Left ventricle myocardium inferior (tissue), 1 donor: ENCODE measurements at regions of chr13 and their contacts with region 1.

Region 1: GRCh38 chr13:33542283-33543088 is 256.9 kb upstream of the STARD13 start:
- DNase-seq: peak; percentile 99
- H3K4me3 ChIP-seq: peak overlapping the region; percentile 67
- H3K27ac ChIP-seq: peak overlapping the region; percentile 94
- H3K4me1 ChIP-seq: peaks cover 49% of the 10 kb centered on the region
- H3K27me3 ChIP-seq: no peaks in the 10 kb centered on the region
- CTCF ChIP-seq: peak; percentile 93

Region 2: DNA sequence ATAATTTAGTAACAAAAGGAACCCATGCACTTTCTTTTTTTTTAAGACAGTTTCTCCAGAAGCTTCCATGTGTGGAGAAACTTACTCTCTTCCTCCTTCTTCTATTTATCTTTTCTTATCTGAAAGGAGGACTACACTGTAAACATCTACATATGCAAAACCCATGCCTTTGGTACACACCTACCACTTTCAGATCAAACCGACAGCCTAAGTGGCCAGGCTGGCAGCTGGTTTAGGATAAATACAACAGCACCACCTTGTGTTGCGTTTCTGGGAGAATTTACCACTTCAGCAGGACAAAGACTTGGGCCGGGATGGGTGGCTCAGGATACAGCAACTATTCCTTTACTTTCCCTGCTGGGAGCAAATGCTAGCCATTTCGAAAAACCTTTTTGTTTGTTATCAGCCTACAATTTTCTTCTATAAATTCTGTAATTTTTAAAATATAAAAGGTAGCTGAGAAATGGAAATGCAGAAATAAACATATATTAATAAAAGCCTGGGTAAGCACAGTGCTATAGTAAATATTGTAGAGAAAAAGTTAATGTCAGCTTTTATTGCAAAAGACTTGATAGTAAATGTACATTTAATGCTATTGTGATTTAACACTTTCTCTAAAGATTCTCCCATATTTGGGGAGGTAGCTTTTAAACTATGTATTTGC is 181.4 kb after region 1 on chr13:
- intact Hi-C with region 1: loop called (anchors 5 kb)
- DNase-seq: peak; percentile 55
- H3K4me3 ChIP-seq: no peak overlapping the region
- H3K27ac ChIP-seq: peak overlapping the region; percentile 77
- H3K4me1 ChIP-seq: peaks cover 54% of the 10 kb centered on the region
- H3K27me3 ChIP-seq: no peaks in the 10 kb centered on the region
- CTCF ChIP-seq: peak; percentile 86